ENCODE measurements at regions of chr6 and their contacts with region 1.

Region 1: DNA sequence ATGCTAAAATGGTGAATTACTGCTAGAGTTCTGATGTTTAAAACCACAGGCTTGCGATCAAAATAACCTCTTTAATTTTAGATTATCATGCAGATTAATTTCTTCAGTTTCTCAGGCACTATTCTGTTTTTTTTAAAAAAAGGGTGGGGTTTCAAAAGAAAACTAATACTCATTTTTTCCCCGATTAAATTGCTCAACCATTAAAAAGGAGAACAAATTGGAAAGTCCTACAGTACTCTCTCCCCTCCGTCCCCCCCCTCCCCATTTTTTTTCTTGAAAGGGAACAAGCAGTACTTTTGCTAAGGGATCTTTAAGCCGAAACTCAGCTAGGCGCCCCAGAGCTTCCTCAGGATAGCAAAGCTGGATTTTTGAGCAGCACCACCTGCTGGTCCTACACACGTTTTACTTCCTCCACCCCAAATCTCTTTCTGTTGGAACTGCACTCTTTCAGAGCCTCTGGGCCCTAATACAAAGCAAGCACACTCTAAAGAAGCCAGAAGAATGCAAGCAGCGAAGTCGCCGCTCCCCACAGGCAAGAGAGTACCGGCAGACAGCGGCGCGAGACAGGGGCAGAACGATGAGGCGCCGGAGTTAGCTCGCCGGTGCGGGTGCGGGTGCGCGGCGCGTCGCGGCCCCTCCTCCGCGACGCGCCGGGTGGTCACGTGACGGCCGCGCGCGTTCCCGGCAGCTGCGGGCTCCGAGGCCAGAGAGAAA is at the start of gene RNF146:
- DNase-seq: peak; percentile 85
- H3K4me3 ChIP-seq: peak within 1 kb of the TSS; percentile 76
- H3K27ac ChIP-seq: peak within 1 kb of the TSS; percentile 95
- H3K4me1 ChIP-seq: peaks cover 19% of the 10 kb centered on the region
- CTCF ChIP-seq: peak; percentile 86
- total RNA-seq, gene RNF146: 11.1 and 16.2 TPM in 2 replicates

Region 2: GRCh38 chr6:127058027-127058426 is 208.3 kb before region 1 on chr6:
- CTCF ChIA-PET with region 1: no interaction called
- POLR2A ChIA-PET with region 1: no interaction called
- intact Hi-C with region 1: no loop called
- DNase-seq: no peak
- H3K4me3 ChIP-seq: no peak overlapping the region
- H3K27ac ChIP-seq: no peak overlapping the region
- H3K4me1 ChIP-seq: no peaks in the 10 kb centered on the region
- CTCF ChIP-seq: no peak

Region 3: GRCh38 chr6:127342946-127343808 is 76.8 kb after region 1 on chr6 and contains the start of gene ECHDC1:
- CTCF ChIA-PET with region 1: no interaction called
- POLR2A ChIA-PET with region 1: interaction called, 10 read pairs
- intact Hi-C with region 1: loop called (anchors 2 kb)
- DNase-seq: peak; percentile 76
- H3K4me3 ChIP-seq: peak within 1 kb of the TSS; percentile 76
- H3K27ac ChIP-seq: peak within 1 kb of the TSS; percentile 17
- H3K4me1 ChIP-seq: peaks cover 20% of the 10 kb centered on the region
- CTCF ChIP-seq: no peak
- total RNA-seq, gene ECHDC1: 18.6 and 20.1 TPM in 2 replicates

Region 4: GRCh38 chr6:127376685-127377084 is 110.3 kb after region 1 on chr6:
- CTCF ChIA-PET with region 1: no interaction called
- POLR2A ChIA-PET with region 1: no interaction called
- intact Hi-C with region 1: no loop called
- DNase-seq: no peak
- H3K4me3 ChIP-seq: no peak overlapping the region
- H3K27ac ChIP-seq: no peak overlapping the region
- H3K4me1 ChIP-seq: no peaks in the 10 kb centered on the region
- CTCF ChIP-seq: no peak

Region 5: DNA sequence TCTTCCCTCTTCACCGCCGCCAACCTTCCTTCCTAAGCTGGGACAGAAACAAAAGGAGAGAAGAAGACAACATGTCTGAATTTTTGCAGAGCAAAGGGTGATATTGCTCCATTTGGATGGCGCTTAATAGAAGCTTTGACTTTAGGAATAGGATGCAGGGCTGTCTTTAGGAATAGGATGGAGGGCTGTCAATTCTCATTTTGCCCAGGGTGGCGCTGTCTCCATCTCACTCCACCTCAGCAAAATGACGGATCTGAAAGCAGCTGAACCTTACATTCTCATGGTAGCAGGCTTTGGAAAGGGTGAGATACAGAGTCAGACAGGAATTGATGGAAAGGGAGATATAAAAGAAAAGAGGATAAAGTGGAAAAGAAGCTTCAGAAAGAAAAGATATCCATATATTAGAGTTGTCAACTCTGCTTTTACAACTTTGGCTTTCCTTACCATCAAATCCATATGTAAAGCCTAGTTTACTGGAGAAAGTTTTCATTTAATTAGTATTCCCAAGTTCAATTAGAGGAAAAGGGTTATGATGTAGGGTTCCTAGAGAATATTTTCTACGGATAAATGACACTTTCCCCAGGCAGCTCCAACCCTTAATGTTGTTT is 250.4 kb after region 1 on chr6:
- CTCF ChIA-PET with region 1: no interaction called
- POLR2A ChIA-PET with region 1: no interaction called
- intact Hi-C with region 1: loop called (anchors 2 kb)
- DNase-seq: peak; percentile 50
- H3K4me3 ChIP-seq: peak overlapping the region; percentile 68
- H3K27ac ChIP-seq: no peak overlapping the region
- H3K4me1 ChIP-seq: no peaks in the 10 kb centered on the region
- CTCF ChIP-seq: peak; percentile 91

Measured in OCI-LY7 (cell line).